ENCODE measurements at regions of chr12 and their contacts with region 1.

Region 1: GRCh38 chr12:54958048-54958658 is 26.4 kb downstream of the TESPA1 start:
- DNase-seq: peak; percentile 4 to 78 (median 48)
- ATAC-seq: peak; percentile 67
- H3K4me3 ChIP-seq: no peak overlapping the region
- H3K4me3 Mint-ChIP-seq: no peak overlapping the region
- H3K27ac ChIP-seq: no peak overlapping the region
- H3K27ac Mint-ChIP-seq: peak overlapping the region; percentile 52
- H3K4me1 ChIP-seq: peaks cover 75% of the 10 kb centered on the region
- H3K4me1 Mint-ChIP-seq: peaks cover 85% of the 10 kb centered on the region
- H3K27me3 ChIP-seq: no peaks in the 10 kb centered on the region
- H3K27me3 Mint-ChIP-seq: no peaks in the 10 kb centered on the region
- CTCF ChIP-seq: peak; percentile 75

Region 2: DNA sequence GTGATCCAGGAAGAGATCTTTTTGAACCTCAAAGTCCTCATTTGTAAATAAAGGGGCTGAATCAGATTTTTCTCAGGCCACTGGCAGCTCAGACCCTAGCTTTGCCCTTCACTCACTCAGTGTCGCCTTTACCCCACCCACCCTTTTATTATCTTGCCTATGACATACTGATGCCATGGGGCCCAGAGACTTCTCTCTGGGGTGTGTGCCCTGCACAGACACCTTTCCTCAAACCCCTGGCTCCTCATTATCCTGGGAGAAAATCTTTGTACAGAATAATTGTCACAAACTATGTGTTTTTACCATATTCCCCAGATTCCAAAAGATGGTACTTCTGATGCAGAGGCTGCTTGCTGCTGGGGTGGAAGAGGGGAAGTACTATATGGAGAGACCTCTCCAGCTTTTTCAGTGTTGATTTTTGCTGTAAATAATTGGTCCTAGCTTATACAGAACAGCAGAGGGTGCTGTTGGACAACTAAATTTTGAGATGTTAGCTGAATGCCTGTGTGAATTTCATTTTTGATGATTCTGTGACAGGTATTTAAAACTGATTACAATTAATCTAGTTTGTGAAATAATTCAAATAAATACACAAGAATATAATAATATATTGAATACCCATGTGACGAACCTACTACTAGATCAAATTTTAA is 256.1 kb before region 1 on chr12:
- CTCF ChIA-PET with region 1: interaction called, 6 read pairs
- POLR2A ChIA-PET with region 1: no interaction called
- intact Hi-C with region 1: loop called (anchors 1 kb)
- DNase-seq: peak in 3 of 9 experiments; percentile 33 to 77 (median 69)
- ATAC-seq: peak; percentile 54
- H3K4me3 ChIP-seq: no peak overlapping the region
- H3K4me3 Mint-ChIP-seq: no peak overlapping the region
- H3K27ac ChIP-seq: no peak overlapping the region
- H3K27ac Mint-ChIP-seq: no peak overlapping the region
- H3K4me1 ChIP-seq: no peaks in the 10 kb centered on the region
- H3K4me1 Mint-ChIP-seq: no peaks in the 10 kb centered on the region
- H3K27me3 ChIP-seq: no peaks in the 10 kb centered on the region
- H3K27me3 Mint-ChIP-seq: peaks cover 5% of the 10 kb centered on the region
- CTCF ChIP-seq: peak; percentile 84

Region 3: DNA sequence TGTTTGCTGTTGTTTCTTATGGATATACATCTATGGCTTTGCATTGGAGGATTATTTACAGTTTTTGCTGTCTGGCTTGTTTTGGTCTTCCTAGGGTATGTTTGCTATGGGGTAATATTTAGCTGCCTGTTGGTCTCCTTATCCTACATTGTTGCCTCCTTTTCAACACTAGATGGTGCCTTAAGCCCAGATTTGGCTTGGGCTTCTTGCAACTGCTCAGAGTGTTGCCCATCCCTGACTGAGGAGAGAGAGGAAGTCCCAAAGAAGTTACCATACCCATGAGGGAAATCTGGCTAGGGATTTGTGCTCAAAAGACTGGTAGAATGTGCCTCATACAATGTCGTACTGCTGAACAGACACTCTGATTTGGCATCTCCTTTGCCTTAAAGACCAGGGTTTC is 198.4 kb before region 1 on chr12:
- CTCF ChIA-PET with region 1: interaction called, 18 read pairs
- POLR2A ChIA-PET with region 1: no interaction called
- intact Hi-C with region 1: no loop called
- DNase-seq: peak in 2 of 9 experiments; percentile 24 to 48
- ATAC-seq: no peak
- H3K4me3 ChIP-seq: no peak overlapping the region
- H3K4me3 Mint-ChIP-seq: no peak overlapping the region
- H3K27ac ChIP-seq: no peak overlapping the region
- H3K27ac Mint-ChIP-seq: no peak overlapping the region
- H3K4me1 ChIP-seq: no peaks in the 10 kb centered on the region
- H3K4me1 Mint-ChIP-seq: peaks cover 9% of the 10 kb centered on the region
- H3K27me3 ChIP-seq: no peaks in the 10 kb centered on the region
- H3K27me3 Mint-ChIP-seq: no peaks in the 10 kb centered on the region
- CTCF ChIP-seq: no peak

Region 4: GRCh38 chr12:54935235-54935951 is 22.8 kb before region 1 on chr12:
- CTCF ChIA-PET with region 1: interaction called, 26 read pairs
- POLR2A ChIA-PET with region 1: interaction called, 4 read pairs
- intact Hi-C with region 1: loop called in 1 of 2 experiments (anchors 2 kb)
- DNase-seq: peak in 7 of 9 experiments; percentile 12 to 69 (median 36)
- ATAC-seq: peak; percentile 91
- H3K4me3 ChIP-seq: no peak overlapping the region
- H3K4me3 Mint-ChIP-seq: peak overlapping the region; percentile 55
- H3K27ac ChIP-seq: peak overlapping the region in 1 of 2 experiments; percentile 66
- H3K27ac Mint-ChIP-seq: peak overlapping the region; percentile 93
- H3K4me1 ChIP-seq: peaks cover 37% of the 10 kb centered on the region
- H3K4me1 Mint-ChIP-seq: peaks cover 47% of the 10 kb centered on the region
- H3K27me3 ChIP-seq: no peaks in the 10 kb centered on the region
- H3K27me3 Mint-ChIP-seq: no peaks in the 10 kb centered on the region
- CTCF ChIP-seq: no peak

Region 5: GRCh38 chr12:54984658-54985376 is 26.7 kb after region 1 on chr12 and contains the start of gene TESPA1:
- CTCF ChIA-PET with region 1: interaction called, 18 read pairs
- POLR2A ChIA-PET with region 1: interaction called, 18 read pairs
- intact Hi-C with region 1: loop called (anchors 5 kb)
- DNase-seq: peak; percentile 64 to 94 (median 87)
- ATAC-seq: peak; percentile 87
- H3K4me3 ChIP-seq: peak within 1 kb of the TSS; percentile 52 to 59
- H3K4me3 Mint-ChIP-seq: peak within 1 kb of the TSS; percentile 89
- H3K27ac ChIP-seq: peak within 1 kb of the TSS; percentile 87 to 88
- H3K27ac Mint-ChIP-seq: peak within 1 kb of the TSS; percentile 98
- H3K4me1 ChIP-seq: peaks cover 61% of the 10 kb centered on the region
- H3K4me1 Mint-ChIP-seq: peaks cover 93% of the 10 kb centered on the region
- H3K27me3 ChIP-seq: no peaks in the 10 kb centered on the region
- H3K27me3 Mint-ChIP-seq: no peaks in the 10 kb centered on the region
- CTCF ChIP-seq: no peak
- total RNA-seq, gene TESPA1: 70.9 to 84.8 TPM

Region 6: GRCh38 chr12:55043542-55043941 is 85.4 kb after region 1 on chr12:
- CTCF ChIA-PET with region 1: no interaction called
- POLR2A ChIA-PET with region 1: no interaction called
- intact Hi-C with region 1: no loop called
- DNase-seq: peak in 1 of 9 experiments; percentile 16
- ATAC-seq: no peak
- H3K4me3 ChIP-seq: no peak overlapping the region
- H3K4me3 Mint-ChIP-seq: no peak overlapping the region
- H3K27ac ChIP-seq: no peak overlapping the region
- H3K27ac Mint-ChIP-seq: no peak overlapping the region
- H3K4me1 ChIP-seq: peaks cover 2% of the 10 kb centered on the region
- H3K4me1 Mint-ChIP-seq: peaks cover 11% of the 10 kb centered on the region
- H3K27me3 ChIP-seq: no peaks in the 10 kb centered on the region
- H3K27me3 Mint-ChIP-seq: peaks cover 1% of the 10 kb centered on the region
- CTCF ChIP-seq: no peak

Measured in CD8-positive, alpha-beta T cell (primary cell).